ENCODE measurements at regions of chr4 and their contacts with region 1.

Region 1: DNA sequence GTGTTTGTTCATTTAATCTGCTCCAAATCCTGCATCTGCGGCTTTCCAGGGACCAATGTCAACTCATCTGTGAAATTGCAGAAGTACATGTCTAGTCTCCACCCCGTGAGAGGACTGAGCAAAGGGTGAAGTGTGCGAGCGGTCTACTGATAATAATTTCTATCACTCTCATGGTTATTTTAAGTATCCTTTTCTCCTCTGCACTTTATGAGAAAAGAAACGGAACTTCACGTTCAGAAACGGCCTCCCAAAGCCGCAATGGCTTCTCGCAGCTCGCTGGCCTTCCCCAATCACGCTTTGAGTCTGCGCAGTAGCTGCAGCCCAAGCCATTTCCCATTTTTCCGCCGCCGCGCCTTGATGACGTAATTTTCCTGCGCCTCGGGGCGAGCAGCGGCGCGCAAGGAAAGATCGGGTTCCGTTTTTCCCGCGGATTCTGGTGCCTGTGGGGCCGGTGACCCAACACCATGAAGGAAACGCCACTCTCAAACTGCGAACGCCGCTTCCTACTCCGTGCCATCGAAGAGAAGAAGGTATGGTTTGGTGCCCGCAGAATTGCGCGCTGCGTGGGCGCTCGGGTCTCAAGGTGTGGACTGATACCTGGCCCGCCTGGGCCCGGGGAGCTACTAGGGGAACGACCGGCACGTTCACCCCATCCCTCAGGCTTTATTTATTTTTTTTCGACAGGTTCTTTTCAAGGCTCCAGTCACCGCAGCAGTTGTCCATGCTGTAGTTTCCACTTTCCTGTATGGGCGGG is at the start of gene EXOSC9:
- DNase-seq: peak; percentile 96
- ATAC-seq: peak; percentile 95
- total RNA-seq, gene EXOSC9: 10.2 TPM

Region 2: DNA sequence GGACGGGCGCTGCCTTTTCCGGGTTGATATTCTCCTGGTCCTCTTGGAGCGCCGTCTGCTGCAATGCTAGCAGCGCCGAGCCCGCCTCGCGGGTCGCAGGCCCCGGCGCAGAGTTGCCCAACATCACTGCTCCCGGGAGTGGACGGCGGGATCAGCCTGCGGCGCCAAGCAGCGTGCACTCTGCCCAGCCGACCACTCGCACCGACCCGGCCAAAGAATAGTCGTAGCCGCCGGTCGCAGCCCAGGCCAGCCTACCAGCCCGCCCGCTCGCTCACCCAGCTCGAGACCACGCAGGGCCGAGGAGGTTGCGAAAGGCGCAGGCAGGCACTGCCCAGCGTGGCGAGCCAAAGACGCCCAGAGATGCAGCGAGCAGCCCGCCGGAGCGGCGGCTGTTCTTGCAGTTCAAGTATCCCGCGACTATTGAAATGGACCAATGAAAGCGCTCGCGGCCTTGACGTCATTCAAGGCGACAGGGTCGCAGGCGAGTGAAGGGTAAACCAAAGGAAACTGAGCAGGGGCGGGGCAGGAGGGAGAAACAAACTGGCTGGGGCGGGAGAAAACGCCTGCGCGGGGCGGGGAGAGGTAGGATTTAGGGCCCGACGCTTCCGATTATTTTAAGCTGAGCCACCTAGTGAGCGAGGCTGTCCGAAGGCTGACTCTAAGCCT is 22.5 kb after region 1 on chr4 and contains the start of gene CCNA2:
- intact Hi-C with region 1: loop called (anchors 1 kb)
- DNase-seq: peak; percentile 98
- ATAC-seq: peak; percentile 100
- total RNA-seq, gene CCNA2: 1.2 TPM

Region 3: DNA sequence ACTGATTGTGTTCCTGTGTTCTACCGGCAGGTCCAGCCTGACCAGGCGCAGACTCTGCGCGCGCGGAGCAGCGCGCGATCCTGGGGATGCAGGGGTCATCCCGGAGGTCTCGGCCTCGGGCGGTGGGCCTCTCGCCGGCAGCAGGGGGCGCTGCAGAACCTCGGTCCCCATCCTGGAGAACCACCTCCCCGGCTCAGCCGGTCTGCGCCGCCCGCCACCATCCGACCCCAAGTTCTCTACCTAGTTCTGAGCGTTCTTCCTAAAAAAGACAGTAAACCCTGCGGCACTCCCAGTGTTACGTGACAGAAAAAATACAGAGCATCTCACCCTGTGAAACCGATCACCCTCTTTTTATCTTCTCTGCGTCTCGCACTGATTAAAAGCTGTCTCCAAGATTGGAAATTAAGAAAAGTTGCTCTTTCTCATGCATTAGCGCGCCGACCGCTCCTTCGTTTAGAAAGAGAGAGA is 149.1 kb after region 1 on chr4:
- intact Hi-C with region 1: no loop called
- DNase-seq: peak; percentile 87
- ATAC-seq: peak; percentile 93

Region 4: GRCh38 chr4:122224348-122224747 is 423.2 kb after region 1 on chr4:
- intact Hi-C with region 1: loop called (anchors 10 kb)
- DNase-seq: no peak
- ATAC-seq: no peak